ENCODE measurements at regions of chr7 and their contacts with region 1.

Region 1: GRCh38 chr7:101138213-101138870 is 11.4 kb downstream of the SERPINE1 start:
- DNase-seq: peak; percentile 96
- H3K4me3 Mint-ChIP-seq: no peak overlapping the region
- H3K27ac Mint-ChIP-seq: peak overlapping the region; percentile 41
- H3K4me1 Mint-ChIP-seq: peaks cover 60% of the 10 kb centered on the region
- H3K27me3 Mint-ChIP-seq: peaks cover 10% of the 10 kb centered on the region

Region 2: GRCh38 chr7:100819551-100819950 is 318.8 kb before region 1 on chr7:
- CTCF ChIA-PET with region 1: no interaction called
- intact Hi-C with region 1: no loop called
- DNase-seq: no peak
- H3K4me3 Mint-ChIP-seq: no peak overlapping the region
- H3K27ac Mint-ChIP-seq: no peak overlapping the region
- H3K4me1 Mint-ChIP-seq: no peaks in the 10 kb centered on the region
- H3K27me3 Mint-ChIP-seq: peaks cover 2% of the 10 kb centered on the region

Region 3: GRCh38 chr7:100889761-100890634 is 248.3 kb before region 1 on chr7:
- CTCF ChIA-PET with region 1: no interaction called
- intact Hi-C with region 1: loop called (anchors 5 kb)
- DNase-seq: peak; percentile 92
- H3K4me3 Mint-ChIP-seq: peak overlapping the region; percentile 85
- H3K27ac Mint-ChIP-seq: no peak overlapping the region
- H3K4me1 Mint-ChIP-seq: peaks cover 42% of the 10 kb centered on the region
- H3K27me3 Mint-ChIP-seq: peaks cover 18% of the 10 kb centered on the region

Region 4: GRCh38 chr7:101126651-101127280 is 11.6 kb before region 1 on chr7 and contains the start of gene SERPINE1:
- CTCF ChIA-PET with region 1: interaction called, 27 read pairs
- intact Hi-C with region 1: loop called (anchors 1 kb)
- DNase-seq: peak; percentile 61
- H3K4me3 Mint-ChIP-seq: peak within 1 kb of the TSS; percentile 45
- H3K27ac Mint-ChIP-seq: no peak within 1 kb of the TSS
- H3K4me1 Mint-ChIP-seq: peaks cover 35% of the 10 kb centered on the region
- H3K27me3 Mint-ChIP-seq: peaks cover 46% of the 10 kb centered on the region
- total RNA-seq, gene SERPINE1: 0.07 TPM in 1 of 2 experiments, not detected in the other

Region 5: GRCh38 chr7:101165075-101165957 is 27.0 kb after region 1 on chr7 and contains the start of gene VGF:
- CTCF ChIA-PET with region 1: interaction called, 17 read pairs
- intact Hi-C with region 1: loop called (anchors 2 kb)
- DNase-seq: peak; percentile 95
- H3K4me3 Mint-ChIP-seq: peak within 1 kb of the TSS; percentile 77
- H3K27ac Mint-ChIP-seq: no peak within 1 kb of the TSS
- H3K4me1 Mint-ChIP-seq: peaks cover 58% of the 10 kb centered on the region
- H3K27me3 Mint-ChIP-seq: peaks cover 58% of the 10 kb centered on the region
- total RNA-seq, gene VGF: not detected

Region 6: DNA sequence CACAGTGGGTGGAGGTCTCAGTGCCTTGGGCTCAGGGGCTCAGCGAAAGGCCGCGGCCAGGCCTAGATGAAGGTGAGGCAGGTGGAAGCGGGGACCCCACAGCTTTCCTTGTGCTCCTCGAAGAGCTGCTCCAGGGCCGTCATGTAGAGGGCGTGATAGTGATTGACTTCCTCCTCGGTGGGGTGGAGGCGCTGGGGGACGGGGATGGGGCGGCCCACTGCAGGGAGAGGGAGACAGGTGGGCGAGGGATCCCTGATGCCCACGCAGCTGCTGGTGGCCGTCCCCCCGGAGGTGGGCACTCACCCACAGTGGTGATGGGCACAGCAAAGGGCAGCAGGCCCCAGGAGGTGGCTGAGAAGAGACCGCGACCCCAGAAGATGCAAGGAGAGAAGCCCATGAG is 57.5 kb after region 1 on chr7:
- CTCF ChIA-PET with region 1: interaction called, 233 read pairs
- intact Hi-C with region 1: no loop called
- DNase-seq: no peak
- H3K4me3 Mint-ChIP-seq: no peak overlapping the region
- H3K27ac Mint-ChIP-seq: no peak overlapping the region
- H3K4me1 Mint-ChIP-seq: peaks cover 3% of the 10 kb centered on the region
- H3K27me3 Mint-ChIP-seq: peaks cover 7% of the 10 kb centered on the region

Region 7: DNA sequence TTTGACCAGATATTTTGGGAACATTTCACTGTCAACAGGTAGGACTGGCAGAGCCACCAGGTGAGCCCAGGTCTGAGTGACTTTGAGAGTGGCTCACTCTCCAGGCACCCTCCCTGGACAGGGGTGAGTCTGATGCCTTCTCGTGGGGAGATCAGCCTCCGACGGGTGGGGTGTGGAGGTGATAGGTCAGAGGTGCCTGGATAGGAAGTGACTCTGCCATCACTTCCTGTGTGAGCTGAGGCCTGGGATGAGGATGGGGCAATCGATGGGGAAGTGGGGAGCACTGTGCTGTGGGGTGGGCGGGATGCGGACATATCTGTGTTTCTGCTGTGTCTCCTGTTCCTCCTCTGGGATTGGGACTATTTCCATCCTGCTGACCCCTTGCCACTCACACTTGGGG is 148.7 kb after region 1 on chr7:
- CTCF ChIA-PET with region 1: interaction called, 100 read pairs
- intact Hi-C with region 1: no loop called
- DNase-seq: no peak
- H3K4me3 Mint-ChIP-seq: no peak overlapping the region
- H3K27ac Mint-ChIP-seq: no peak overlapping the region
- H3K4me1 Mint-ChIP-seq: peaks cover 6% of the 10 kb centered on the region
- H3K27me3 Mint-ChIP-seq: peaks cover 5% of the 10 kb centered on the region

Region 8: DNA sequence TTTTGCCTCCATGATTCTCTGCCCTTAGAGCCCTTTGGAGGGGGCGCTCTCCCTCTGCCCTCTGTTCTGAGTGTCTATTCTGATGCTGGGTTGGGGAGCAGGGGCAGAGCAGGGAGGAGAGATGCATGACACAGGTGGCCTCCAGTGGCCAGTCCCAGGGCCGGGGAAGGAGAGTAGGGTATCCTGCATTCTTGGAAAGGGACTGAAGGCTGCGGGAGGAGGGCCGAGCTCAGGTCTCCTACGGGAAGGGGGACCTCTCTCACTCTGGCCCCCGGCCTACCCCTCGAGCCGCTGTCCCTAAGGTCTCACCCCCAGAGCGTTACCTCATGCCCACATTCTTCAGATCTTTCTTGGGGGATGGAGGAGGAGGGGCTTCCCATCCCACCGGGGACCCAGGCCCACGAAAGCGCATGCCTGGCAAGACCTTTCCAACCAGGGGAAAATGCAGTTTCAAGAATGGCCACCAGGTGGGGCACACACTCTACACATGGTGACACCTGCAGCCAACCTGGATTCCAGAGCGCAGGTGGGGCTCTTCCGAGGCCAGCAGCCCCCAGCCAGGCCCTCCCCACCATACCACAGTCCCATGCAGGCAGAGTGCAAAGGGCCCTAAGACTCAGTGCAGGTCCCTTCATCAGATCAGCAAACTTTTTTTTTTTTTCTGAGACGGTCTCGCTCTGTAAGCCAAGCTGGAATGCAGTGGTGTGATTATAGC is 404.3 kb after region 1 on chr7:
- CTCF ChIA-PET with region 1: no interaction called
- intact Hi-C with region 1: no loop called
- DNase-seq: peak; percentile 89
- H3K4me3 Mint-ChIP-seq: no peak overlapping the region
- H3K27ac Mint-ChIP-seq: no peak overlapping the region
- H3K4me1 Mint-ChIP-seq: peaks cover 1% of the 10 kb centered on the region
- H3K27me3 Mint-ChIP-seq: no peaks in the 10 kb centered on the region

Measured in activated naive CD4-positive, alpha-beta T cell treated with anti-CD3 and anti-CD28 coated beads for 36 hours (primary cell).